ENCODE measurements at regions of chr6 and their contacts with region 1.

Region 1: DNA sequence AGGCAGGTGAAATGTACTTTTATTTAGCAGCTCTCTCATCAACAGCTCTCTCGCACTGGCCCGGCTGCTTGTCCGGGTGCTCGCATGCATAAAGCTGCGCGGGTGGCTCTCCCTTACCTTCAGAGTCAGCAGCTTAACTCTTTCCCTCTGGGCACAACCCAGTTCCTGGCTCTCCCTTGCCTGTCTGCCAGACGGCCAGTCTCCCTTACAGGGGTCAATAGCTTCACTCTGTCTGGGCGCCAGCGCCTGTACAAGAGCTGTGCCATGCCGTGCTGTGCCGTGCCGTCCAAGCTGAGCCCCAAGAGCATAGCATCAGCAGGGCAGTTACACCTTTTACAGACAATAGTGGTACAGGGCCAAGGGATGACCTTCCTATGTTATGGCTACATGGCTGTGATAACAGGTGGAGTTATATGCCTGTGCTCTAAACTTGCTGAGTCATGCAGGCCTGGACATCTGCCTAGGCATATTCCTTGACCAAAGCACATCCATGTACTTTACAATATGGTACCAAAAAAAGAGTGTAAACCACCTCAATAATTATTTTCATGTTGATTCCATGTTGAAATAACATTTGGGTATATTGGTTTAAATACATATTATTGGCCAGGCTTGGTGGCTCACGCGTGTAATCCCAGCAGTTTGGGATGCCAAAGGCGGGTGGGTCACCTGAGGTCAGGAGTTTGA is 47.9 kb downstream of the BLTP3A start:
- DNase-seq: no peak
- ATAC-seq: peak in 3 of 4 donors; percentile 20 to 51 (median 24)
- H3K4me3 ChIP-seq: no peak overlapping the region
- H3K27ac ChIP-seq: no peak overlapping the region
- H3K4me1 ChIP-seq: peaks cover 0 to 16% (median 0%) of the 10 kb centered on the region in 12 donors
- H3K27me3 ChIP-seq: no peaks in the 10 kb centered on the region
- CTCF ChIP-seq: no peak
- POLR2A ChIP-seq: no peak

Region 2: DNA sequence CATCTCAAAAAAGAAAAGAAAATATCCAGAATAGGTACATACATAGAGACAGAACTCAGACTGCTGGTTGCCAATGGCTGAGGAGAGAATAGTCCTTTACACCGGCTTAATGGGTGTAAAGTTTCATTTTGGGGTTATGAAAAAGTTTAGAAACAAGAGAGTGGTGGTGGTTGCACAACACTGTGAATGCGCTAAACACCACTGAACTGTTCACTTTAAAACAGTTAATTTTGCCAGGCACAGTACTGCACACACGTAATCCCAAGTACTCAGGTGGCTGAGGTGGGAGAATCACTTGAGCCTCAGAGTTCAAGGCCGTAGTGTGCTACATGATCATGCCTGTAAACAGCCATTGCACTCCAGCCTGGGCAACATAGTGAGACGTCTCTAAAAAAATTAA is 150.9 kb before region 1 on chr6:
- intact Hi-C with region 1: no loop called
- DNase-seq: no peak
- ATAC-seq: no peak
- H3K4me3 ChIP-seq: no peak overlapping the region
- H3K27ac ChIP-seq: no peak overlapping the region
- H3K4me1 ChIP-seq: peaks cover 0 to 45% (median 19%) of the 10 kb centered on the region in 12 donors
- H3K27me3 ChIP-seq: no peaks in the 10 kb centered on the region
- CTCF ChIP-seq: no peak
- POLR2A ChIP-seq: no peak

Region 3: GRCh38 chr6:34819571-34820480 is 20.0 kb before region 1 on chr6:
- intact Hi-C with region 1: loop called in 1 of 10 experiments (anchors 2 kb)
- DNase-seq: no peak
- ATAC-seq: peak in 3 of 4 donors; percentile 47 to 61 (median 47)
- H3K4me3 ChIP-seq: no peak overlapping the region
- H3K27ac ChIP-seq: peak overlapping the region in 6 of 12 donors; percentile 13 to 81 (median 38)
- H3K4me1 ChIP-seq: peaks cover 7 to 44% (median 18%) of the 10 kb centered on the region in 12 donors
- H3K27me3 ChIP-seq: no peaks in the 10 kb centered on the region
- CTCF ChIP-seq: no peak
- POLR2A ChIP-seq: no peak

Region 4: DNA sequence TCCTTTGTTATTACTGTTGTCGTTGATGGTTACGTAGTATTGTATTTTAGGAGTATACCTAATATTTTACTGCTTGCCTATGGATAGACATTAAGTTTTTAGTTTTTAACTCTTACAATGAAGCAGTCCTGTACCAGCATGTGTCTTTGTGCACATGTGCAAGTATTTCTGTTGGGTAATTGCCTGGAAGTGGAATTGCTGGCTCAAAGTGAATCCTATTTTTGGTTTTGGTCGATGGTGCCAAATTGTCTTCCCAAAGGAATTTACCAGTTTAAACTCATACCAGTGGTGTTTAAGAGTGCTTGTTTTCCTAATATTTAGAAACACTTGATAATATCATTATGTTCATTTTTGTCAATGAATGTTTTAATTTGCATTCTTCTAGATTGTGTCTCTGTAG is 124.8 kb after region 1 on chr6:
- intact Hi-C with region 1: no loop called
- DNase-seq: peak in 2 of 5 donors; percentile 29 to 31
- ATAC-seq: peak; percentile 40 to 69 (median 53)
- H3K4me3 ChIP-seq: no peak overlapping the region
- H3K27ac ChIP-seq: peak overlapping the region in 10 of 12 donors; percentile 12 to 71 (median 54)
- H3K4me1 ChIP-seq: peaks cover 0 to 54% (median 42%) of the 10 kb centered on the region in 12 donors
- H3K27me3 ChIP-seq: no peaks in the 10 kb centered on the region
- CTCF ChIP-seq: no peak
- POLR2A ChIP-seq: no peak

Measured in heart left ventricle (tissue), 16 donors.